Activated CD4-positive, alpha-beta memory T cell treated with anti-CD3 and anti-CD28 coated beads for 36 hours (primary cell): ENCODE measurements at regions of chr10 and their contacts with region 1.

Region 1: GRCh38 chr10:28250782-28251181 is 52.1 kb downstream of the MPP7 start:
- DNase-seq: no peak
- H3K4me3 Mint-ChIP-seq: no peak overlapping the region
- H3K27ac Mint-ChIP-seq: no peak overlapping the region
- H3K4me1 Mint-ChIP-seq: peaks cover 6% of the 10 kb centered on the region
- H3K27me3 Mint-ChIP-seq: no peaks in the 10 kb centered on the region

Region 2: GRCh38 chr10:28291881-28292297 is 41.1 kb after region 1 on chr10:
- CTCF ChIA-PET with region 1: interaction called, 4 read pairs
- POLR2A ChIA-PET with region 1: no interaction called
- intact Hi-C with region 1: loop called (anchors 2 kb)
- DNase-seq: peak; percentile 77
- H3K4me3 Mint-ChIP-seq: no peak overlapping the region
- H3K27ac Mint-ChIP-seq: peak overlapping the region; percentile 7
- H3K4me1 Mint-ChIP-seq: peaks cover 43% of the 10 kb centered on the region
- H3K27me3 Mint-ChIP-seq: no peaks in the 10 kb centered on the region